ENCODE measurements at regions of chr12 and their contacts with region 1.

Region 1: GRCh38 chr12:113334786-113335540 is at the start of gene SLC8B1:
- DNase-seq: peak; percentile 81 to 98
- H3K4me3 ChIP-seq: peak within 1 kb of the TSS; percentile 66
- CTCF ChIP-seq: no peak
- POLR2A ChIP-seq: peak in 1 of 2 donors; percentile 67
- total RNA-seq, gene SLC8B1: 31.8 to 63.4 (median 38.8) TPM

Region 2: GRCh38 chr12:111405149-111405860 is 1929.7 kb before region 1 on chr12:
- intact Hi-C with region 1: loop called (anchors 5 kb)
- DNase-seq: peak; percentile 93 to 99
- H3K4me3 ChIP-seq: no peak overlapping the region
- CTCF ChIP-seq: no peak
- POLR2A ChIP-seq: no peak

Region 3: DNA sequence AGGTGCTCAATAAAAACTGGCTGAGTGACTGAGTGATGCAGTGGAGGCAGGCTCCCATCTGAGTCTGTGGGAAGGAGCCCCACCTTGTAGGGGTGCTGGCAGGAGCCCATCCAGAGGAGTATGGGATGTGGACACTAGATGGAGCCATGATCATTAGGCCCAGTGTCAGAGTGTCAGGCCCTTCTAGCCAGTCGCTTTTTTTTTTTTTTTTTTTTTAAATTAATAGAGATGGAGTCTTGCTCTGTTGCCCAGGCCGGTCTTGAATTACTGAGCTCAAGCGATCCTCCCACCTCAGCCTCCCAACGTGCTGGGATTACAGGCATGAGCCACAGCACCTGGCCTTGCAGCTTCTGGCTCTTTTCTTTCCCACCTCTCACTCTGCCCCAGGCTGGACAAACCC is 138.0 kb before region 1 on chr12:
- intact Hi-C with region 1: loop called (anchors 10 kb)
- DNase-seq: peak; percentile 78 to 93
- H3K4me3 ChIP-seq: no peak overlapping the region
- CTCF ChIP-seq: no peak
- POLR2A ChIP-seq: no peak

Region 4: GRCh38 chr12:113432986-113433385 is 98.0 kb after region 1 on chr12:
- intact Hi-C with region 1: no loop called
- DNase-seq: no peak
- H3K4me3 ChIP-seq: no peak overlapping the region
- CTCF ChIP-seq: no peak
- POLR2A ChIP-seq: no peak

Region 5: DNA sequence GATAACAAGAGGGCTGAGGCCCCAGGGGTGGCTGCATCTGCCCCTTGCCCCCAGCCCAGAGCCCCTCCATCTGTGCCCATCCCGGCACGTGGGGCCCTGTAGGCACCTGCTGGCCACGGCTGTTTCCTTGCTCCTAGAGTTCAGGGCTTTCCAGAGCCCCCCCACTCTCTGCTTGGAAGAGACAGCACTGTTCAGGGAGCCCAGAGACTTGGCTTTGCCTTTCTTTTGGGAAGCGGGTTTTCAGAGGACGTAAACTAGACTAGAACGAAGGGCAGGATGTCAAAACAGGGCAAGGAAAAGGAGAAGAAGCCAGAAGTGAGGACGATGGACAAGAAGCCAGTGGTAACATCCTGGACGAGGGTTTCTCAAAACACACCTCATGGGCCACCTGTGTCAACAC is 300.0 kb after region 1 on chr12:
- intact Hi-C with region 1: no loop called
- DNase-seq: peak in 1 of 2 donors; percentile 59
- H3K4me3 ChIP-seq: no peak overlapping the region
- CTCF ChIP-seq: no peak
- POLR2A ChIP-seq: no peak

Measured in lower leg skin (tissue), 4 donors.